ENCODE measurements at regions of chr5 and their contacts with region 1.

Region 1: DNA sequence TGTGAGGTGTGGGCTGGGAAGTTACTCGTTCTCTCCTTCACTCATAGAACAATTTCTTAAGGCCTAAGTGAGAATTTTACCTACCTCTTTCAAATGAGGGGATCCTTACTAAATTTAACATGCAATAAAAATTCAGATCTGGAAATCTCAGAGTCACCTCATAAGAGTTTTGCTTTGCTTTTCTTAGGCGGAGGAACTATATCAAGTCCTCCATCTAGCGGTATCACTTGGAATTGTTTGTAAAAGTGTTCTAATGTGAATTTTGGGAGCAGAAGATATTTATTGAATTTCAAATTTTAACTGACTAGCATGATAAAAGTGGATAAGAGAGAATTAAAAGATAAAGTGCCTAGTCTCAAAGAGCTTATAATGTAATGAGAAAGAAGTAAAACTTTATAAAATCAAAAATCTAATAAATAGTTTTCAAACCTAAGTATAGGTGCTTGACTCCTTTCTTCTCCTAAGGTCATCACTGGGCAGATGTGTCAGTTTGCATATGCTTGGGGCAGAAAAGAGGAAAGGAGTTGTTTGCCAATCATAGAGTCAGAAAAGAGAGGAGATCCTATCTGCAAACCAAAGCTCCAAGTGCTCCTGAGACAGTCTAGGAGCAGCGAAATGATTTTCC is 145.7 kb upstream of the DAB2 start:
- DNase-seq: no peak
- H3K4me3 ChIP-seq: no peak overlapping the region
- H3K27ac ChIP-seq: no peak overlapping the region
- H3K27me3 ChIP-seq: peaks cover 6% of the 10 kb centered on the region
- CTCF ChIP-seq: peak; percentile 78

Region 2: DNA sequence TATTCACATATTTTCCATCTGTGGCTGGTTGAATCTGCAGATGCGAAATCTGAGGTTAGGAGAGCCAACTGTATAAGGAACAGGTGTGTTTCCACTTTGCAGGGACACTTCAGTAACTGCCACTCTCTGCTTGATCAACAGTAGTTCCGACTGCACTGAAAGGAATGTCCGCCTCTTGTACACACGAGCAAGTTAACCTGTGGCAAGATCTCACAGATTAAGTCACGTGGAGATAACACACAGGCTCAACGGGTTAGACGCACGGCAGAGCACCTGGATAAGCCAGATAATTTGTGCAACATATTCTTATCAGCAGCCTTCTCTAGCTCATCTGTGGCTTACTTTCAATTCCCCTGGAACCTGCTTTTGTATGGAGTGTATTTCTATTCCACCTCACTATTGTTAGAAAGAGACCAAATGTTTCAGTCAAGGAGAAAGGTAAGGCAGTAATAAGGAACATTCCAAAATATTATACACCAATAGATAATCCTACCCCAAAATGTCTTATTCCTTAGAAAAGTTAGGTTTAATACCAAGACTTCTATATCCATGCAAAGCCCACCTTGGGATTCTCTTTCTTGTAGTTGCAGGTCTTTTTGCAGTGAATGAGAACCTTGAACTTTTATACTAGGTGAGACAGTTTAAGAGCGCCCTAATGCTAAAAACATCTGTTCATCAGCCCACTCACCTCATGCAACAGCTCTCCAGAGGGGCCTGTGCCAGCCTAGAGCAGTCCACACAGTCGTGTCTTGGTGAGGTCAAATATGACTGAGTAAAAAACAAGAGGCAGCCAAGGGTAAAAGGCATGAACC is 199.8 kb before region 1 on chr5:
- CTCF ChIA-PET with region 1: interaction called, 106 read pairs
- POLR2A ChIA-PET with region 1: no interaction called
- DNase-seq: no peak
- H3K4me3 ChIP-seq: no peak overlapping the region
- H3K27ac ChIP-seq: no peak overlapping the region
- H3K27me3 ChIP-seq: no peaks in the 10 kb centered on the region
- CTCF ChIP-seq: no peak; the same call in 1 of the 2 replicates

Region 3: DNA sequence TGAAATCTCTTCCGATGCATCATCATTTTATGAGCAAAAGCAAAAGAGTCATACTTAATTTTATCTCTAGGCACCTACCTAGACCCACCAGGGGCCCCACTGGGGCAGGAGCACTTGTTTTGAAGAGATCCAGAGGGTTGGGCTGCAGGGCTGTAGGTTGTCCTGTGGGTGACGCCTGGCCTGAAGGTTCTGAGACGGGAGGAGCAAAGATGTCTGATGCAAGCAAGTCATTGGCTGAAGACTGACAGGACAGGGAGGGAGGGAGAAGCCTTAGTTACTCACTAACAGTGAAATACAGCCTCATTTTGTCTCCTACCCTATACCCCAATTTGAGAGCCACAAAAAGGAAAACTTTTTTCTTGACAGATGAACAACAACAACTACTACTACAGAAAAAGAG is 189.1 kb before region 1 on chr5:
- CTCF ChIA-PET with region 1: interaction called, 106 read pairs
- POLR2A ChIA-PET with region 1: no interaction called
- DNase-seq: no peak
- H3K4me3 ChIP-seq: no peak overlapping the region
- H3K27ac ChIP-seq: no peak overlapping the region
- H3K27me3 ChIP-seq: no peaks in the 10 kb centered on the region
- CTCF ChIP-seq: no peak

Measured in AG04450 (cell line).